Naive thymus-derived CD4-positive, alpha-beta T cell (primary cell): ENCODE measurements at regions of chr19 and their contacts with region 1.

Region 1: DNA sequence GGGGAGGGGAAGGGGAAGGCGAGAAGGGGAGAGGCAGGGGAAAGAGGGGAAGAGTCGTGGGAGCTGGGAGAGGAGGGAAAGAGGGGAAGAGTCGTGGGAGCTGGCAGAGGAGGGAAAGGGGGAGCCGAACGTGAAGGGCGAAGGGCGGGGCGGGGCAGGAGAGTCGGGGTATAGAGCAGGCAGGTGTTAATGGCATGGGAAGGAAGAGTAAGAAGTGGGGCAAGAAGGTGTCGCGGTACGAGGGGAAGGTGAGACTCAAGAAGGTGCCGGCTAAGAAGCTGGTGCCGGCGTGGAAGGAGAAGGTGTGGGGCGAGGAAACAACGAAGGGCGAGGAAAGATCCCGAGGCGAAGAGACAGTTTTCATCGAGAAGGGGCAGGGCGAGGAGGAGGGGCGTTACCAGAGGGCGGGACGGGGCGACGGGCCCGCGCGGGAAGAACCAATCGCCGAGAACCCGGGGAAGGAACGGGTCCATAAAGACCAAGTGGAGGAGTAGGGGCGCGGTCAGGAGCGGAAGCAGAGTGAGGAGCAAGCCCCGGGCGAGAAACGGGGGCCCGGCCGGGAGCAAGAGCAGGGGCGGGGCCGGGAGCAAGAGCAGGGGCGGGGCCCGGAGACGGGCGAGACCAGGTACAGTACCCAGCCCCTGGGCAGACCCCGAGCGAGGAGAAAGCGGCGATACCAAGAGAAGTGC is 463 bp downstream of the CATSPERG start:
- DNase-seq: peak; percentile 86 to 94 (median 93)
- ATAC-seq: peak; percentile 77
- H3K4me3 ChIP-seq: peak overlapping the region; percentile 92
- H3K4me3 Mint-ChIP-seq: peak overlapping the region; percentile 92 to 100 (median 96)
- H3K27ac ChIP-seq: peak overlapping the region; percentile 86
- H3K27ac Mint-ChIP-seq: peak overlapping the region; percentile 91 to 100 (median 97)
- H3K4me1 ChIP-seq: peaks cover 3 to 5% of the 10 kb centered on the region in 2 donors
- H3K4me1 Mint-ChIP-seq: peaks cover 16 to 28% (median 17%) of the 10 kb centered on the region in 7 donors
- H3K27me3 ChIP-seq: no peaks in the 10 kb centered on the region
- H3K27me3 Mint-ChIP-seq: no peaks in the 10 kb centered on the region

Region 2: DNA sequence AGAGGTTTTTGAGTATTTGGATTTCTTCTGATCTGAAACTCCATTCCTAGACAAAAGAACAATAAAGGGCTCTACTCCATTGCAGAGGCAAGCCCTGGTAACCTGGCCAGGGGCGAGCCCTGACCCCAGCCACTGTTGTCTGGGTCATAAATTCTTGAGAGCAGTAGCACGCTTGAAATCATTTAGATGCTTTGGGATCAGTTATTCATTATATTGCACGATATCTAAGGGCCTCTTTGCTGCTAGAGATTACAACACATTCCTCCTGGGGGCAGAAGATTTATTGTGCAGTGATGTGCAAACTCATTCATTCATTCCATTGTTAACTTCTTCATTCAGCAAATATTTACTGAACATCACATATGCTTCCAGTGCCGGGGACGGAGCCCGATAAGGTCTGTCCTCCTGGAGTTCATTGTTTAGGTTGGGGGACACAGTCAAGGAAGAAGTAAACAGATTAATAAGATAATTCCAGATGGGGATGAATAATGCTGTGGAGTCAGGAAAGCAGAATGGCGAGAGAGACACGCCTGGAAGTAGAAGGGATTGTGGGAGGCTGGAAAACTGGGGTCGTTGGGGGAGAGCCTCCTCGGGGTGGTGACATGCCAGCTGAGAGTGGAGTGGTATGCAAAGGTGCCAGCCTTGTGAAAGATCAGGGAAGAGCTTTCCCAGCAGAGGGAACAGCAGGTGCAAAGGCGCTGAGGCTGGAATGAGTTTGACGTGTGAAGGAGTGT is 394.1 kb before region 1 on chr19:
- CTCF ChIA-PET with region 1: no interaction called
- POLR2A ChIA-PET with region 1: no interaction called
- intact Hi-C with region 1: no loop called
- DNase-seq: no peak
- ATAC-seq: no peak
- H3K4me3 ChIP-seq: no peak overlapping the region
- H3K4me3 Mint-ChIP-seq: no peak overlapping the region
- H3K27ac ChIP-seq: no peak overlapping the region
- H3K27ac Mint-ChIP-seq: peak overlapping the region in 1 of 9 donors; percentile 23
- H3K4me1 ChIP-seq: no peaks in the 10 kb centered on the region
- H3K4me1 Mint-ChIP-seq: peaks cover 0 to 9% (median 3%) of the 10 kb centered on the region in 7 donors
- H3K27me3 ChIP-seq: no peaks in the 10 kb centered on the region
- H3K27me3 Mint-ChIP-seq: no peaks in the 10 kb centered on the region

Region 3: GRCh38 chr19:38095411-38096308 is 240.4 kb before region 1 on chr19:
- CTCF ChIA-PET with region 1: no interaction called
- POLR2A ChIA-PET with region 1: no interaction called
- intact Hi-C with region 1: loop called in 1 of 2 experiments (anchors 5 kb)
- DNase-seq: peak; percentile 7 to 49 (median 37)
- ATAC-seq: peak; percentile 79
- H3K4me3 ChIP-seq: no peak overlapping the region
- H3K4me3 Mint-ChIP-seq: no peak overlapping the region
- H3K27ac ChIP-seq: no peak overlapping the region
- H3K27ac Mint-ChIP-seq: peak overlapping the region in 6 of 9 donors; percentile 19 to 80 (median 46)
- H3K4me1 ChIP-seq: no peaks in the 10 kb centered on the region
- H3K4me1 Mint-ChIP-seq: peaks cover 0 to 8% (median 4%) of the 10 kb centered on the region in 7 donors
- H3K27me3 ChIP-seq: no peaks in the 10 kb centered on the region
- H3K27me3 Mint-ChIP-seq: no peaks in the 10 kb centered on the region

Region 4: GRCh38 chr19:38245826-38246498 is 90.1 kb before region 1 on chr19:
- CTCF ChIA-PET with region 1: interaction called, 15 read pairs
- POLR2A ChIA-PET with region 1: no interaction called
- intact Hi-C with region 1: loop called (anchors 1 kb)
- DNase-seq: no peak
- ATAC-seq: no peak
- H3K4me3 ChIP-seq: no peak overlapping the region
- H3K4me3 Mint-ChIP-seq: no peak overlapping the region
- H3K27ac ChIP-seq: no peak overlapping the region
- H3K27ac Mint-ChIP-seq: peak overlapping the region in 1 of 9 donors; percentile 33
- H3K4me1 ChIP-seq: peaks cover 0 to 3% of the 10 kb centered on the region in 2 donors
- H3K4me1 Mint-ChIP-seq: peaks cover 4 to 14% (median 5%) of the 10 kb centered on the region in 7 donors
- H3K27me3 ChIP-seq: no peaks in the 10 kb centered on the region
- H3K27me3 Mint-ChIP-seq: peaks cover 0 to 5% (median 0%) of the 10 kb centered on the region in 5 donors

Region 5: DNA sequence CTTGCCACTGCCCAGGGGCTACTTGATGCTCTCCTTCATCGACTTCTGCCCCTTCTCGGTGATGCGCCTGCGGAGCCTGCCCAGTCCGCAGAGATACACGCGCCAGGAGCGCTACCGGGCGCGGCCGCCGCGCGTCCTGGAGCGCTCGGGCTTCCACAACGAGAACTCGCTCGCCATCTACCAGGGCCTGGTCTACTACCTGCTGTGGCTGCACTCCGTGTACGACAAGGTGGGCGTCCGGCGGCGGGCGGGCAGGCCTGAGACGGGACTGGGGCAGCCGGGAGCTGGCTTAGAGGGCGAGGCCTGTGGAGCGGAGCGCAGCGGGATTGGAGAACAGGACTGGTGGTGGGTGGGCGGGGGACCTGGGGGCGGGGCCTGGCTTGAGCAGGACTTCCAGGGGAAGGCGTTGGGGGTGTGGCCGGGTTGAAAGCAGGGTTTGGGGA is 25.6 kb after region 1 on chr19:
- CTCF ChIA-PET with region 1: no interaction called
- POLR2A ChIA-PET with region 1: no interaction called
- intact Hi-C with region 1: loop called (anchors 1 kb)
- DNase-seq: peak in 8 of 9 donors; percentile 17 to 80 (median 34)
- ATAC-seq: peak; percentile 83
- H3K4me3 ChIP-seq: peak overlapping the region; percentile 55
- H3K4me3 Mint-ChIP-seq: peak overlapping the region; percentile 62 to 94 (median 83)
- H3K27ac ChIP-seq: no peak overlapping the region
- H3K27ac Mint-ChIP-seq: no peak overlapping the region
- H3K4me1 ChIP-seq: peaks cover 0 to 6% of the 10 kb centered on the region in 2 donors
- H3K4me1 Mint-ChIP-seq: peaks cover 0 to 21% (median 15%) of the 10 kb centered on the region in 7 donors
- H3K27me3 ChIP-seq: no peaks in the 10 kb centered on the region
- H3K27me3 Mint-ChIP-seq: peaks cover 0 to 38% (median 6%) of the 10 kb centered on the region in 5 donors

Region 6: DNA sequence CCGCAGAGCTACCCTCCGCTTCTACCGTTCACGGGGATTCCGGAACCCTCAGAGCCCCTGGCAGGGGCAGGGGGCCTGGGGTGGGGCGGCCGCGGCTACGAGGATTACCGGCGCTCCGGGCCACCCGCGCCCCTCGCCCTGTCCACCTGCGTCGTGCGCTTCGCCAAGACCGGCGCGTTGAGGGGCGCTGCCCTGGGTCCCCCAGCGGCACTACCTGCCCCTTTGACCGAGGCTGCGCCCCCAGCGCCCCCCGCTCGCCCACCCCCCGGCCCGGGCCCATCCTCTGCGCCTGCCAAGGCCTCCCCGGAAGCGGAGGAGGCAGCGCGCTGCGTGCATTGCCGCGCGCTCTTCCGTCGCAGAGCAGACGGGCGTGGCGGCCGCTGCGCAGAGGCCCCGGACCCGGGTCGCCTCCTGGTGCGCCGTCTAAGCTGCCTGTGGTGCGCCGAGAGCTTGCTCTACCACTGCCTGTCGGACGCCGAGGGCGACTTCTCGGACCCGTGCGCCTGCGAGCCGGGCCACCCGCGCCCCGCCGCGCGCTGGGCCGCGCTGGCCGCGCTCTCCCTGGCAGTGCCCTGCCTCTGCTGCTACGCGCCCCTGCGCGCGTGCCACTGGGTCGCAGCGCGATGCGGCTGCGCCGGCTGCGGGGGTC is 59.5 kb after region 1 on chr19:
- CTCF ChIA-PET with region 1: no interaction called
- POLR2A ChIA-PET with region 1: no interaction called
- intact Hi-C with region 1: no loop called
- DNase-seq: peak in 8 of 9 donors; percentile 36 to 66 (median 58)
- ATAC-seq: peak; percentile 79
- H3K4me3 ChIP-seq: peak overlapping the region; percentile 56
- H3K4me3 Mint-ChIP-seq: peak overlapping the region; percentile 65 to 84 (median 81)
- H3K27ac ChIP-seq: peak overlapping the region; percentile 60
- H3K27ac Mint-ChIP-seq: peak overlapping the region in 6 of 9 donors; percentile 5 to 91 (median 82)
- H3K4me1 ChIP-seq: peaks cover 5 to 19% of the 10 kb centered on the region in 2 donors
- H3K4me1 Mint-ChIP-seq: peaks cover 8 to 27% (median 22%) of the 10 kb centered on the region in 7 donors
- H3K27me3 ChIP-seq: no peaks in the 10 kb centered on the region
- H3K27me3 Mint-ChIP-seq: peaks cover 0 to 33% (median 5%) of the 10 kb centered on the region in 5 donors

Region 7: DNA sequence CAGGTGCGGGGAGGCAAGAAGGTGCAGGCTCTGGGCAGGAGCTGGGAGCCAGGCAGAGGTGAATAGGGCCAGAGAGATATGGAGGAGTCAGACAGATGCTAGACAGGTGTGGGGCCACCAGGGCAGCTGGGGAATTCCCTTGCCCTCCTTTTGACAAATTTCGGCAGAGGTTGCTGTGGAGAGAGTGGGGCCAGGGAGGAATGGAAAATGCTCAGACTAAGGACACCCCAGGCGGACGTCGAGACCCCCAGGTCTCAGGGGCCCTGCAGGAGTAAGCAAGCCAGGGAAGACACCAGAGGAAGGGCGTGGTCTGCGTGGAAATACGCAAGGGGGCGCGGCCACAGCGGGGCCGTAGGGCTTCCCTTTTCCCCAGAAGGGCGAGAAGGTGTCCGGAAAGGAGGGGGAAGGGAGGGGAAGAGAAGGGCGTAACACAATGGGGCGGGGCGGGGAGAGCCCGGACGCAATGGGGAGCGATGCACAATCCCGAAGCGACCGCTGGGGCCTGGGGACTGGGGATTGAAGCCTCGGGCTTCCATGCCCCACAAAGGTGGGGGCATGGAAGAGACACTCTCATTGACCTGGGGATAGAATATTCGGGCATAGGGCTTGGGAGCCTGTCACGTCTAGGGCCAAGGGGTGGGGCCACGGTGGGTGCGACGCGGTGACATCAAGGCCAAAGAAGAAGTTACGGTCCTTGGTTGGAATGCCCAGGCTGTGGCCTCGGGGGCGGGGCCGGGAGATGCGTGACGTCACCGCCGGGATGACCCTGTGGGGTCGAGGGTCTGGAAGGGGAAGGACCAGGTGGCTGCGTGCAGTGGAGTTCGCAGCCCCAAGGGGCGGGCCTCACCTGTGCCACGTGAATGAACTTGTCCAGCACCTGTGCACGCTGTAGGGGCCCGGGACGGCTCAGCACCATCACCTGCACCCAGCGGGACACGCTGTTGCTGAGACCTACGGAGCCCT is 81.7 kb after region 1 on chr19:
- CTCF ChIA-PET with region 1: no interaction called
- POLR2A ChIA-PET with region 1: no interaction called
- intact Hi-C with region 1: no loop called
- DNase-seq: peak in 8 of 9 donors; percentile 18 to 66 (median 26)
- ATAC-seq: peak; percentile 94
- H3K4me3 ChIP-seq: peak overlapping the region; percentile 55
- H3K4me3 Mint-ChIP-seq: peak overlapping the region; percentile 83 to 96 (median 86)
- H3K27ac ChIP-seq: peak overlapping the region; percentile 30
- H3K27ac Mint-ChIP-seq: peak overlapping the region; percentile 57 to 82 (median 71)
- H3K4me1 ChIP-seq: peaks cover 12 to 13% of the 10 kb centered on the region in 2 donors
- H3K4me1 Mint-ChIP-seq: peaks cover 20 to 23% (median 22%) of the 10 kb centered on the region in 7 donors
- H3K27me3 ChIP-seq: no peaks in the 10 kb centered on the region
- H3K27me3 Mint-ChIP-seq: peaks cover 0 to 2% (median 0%) of the 10 kb centered on the region in 5 donors

Region 8: GRCh38 chr19:38647368-38647965 is 311.4 kb after region 1 on chr19 and contains the start of gene ACTN4:
- CTCF ChIA-PET with region 1: no interaction called
- POLR2A ChIA-PET with region 1: no interaction called
- intact Hi-C with region 1: loop called in 1 of 2 experiments (anchors 1 kb)
- DNase-seq: peak; percentile 98 to 100 (median 100)
- ATAC-seq: peak; percentile 98
- H3K4me3 ChIP-seq: peak within 1 kb of the TSS; percentile 85
- H3K4me3 Mint-ChIP-seq: peak within 1 kb of the TSS; percentile 74 to 99 (median 89)
- H3K27ac ChIP-seq: peak within 1 kb of the TSS; percentile 69
- H3K27ac Mint-ChIP-seq: peak within 1 kb of the TSS; percentile 74 to 87 (median 84)
- H3K4me1 ChIP-seq: peaks cover 20 to 27% of the 10 kb centered on the region in 2 donors
- H3K4me1 Mint-ChIP-seq: peaks cover 20 to 52% (median 33%) of the 10 kb centered on the region in 7 donors
- H3K27me3 ChIP-seq: peaks cover 0 to 17% of the 10 kb centered on the region in 2 donors
- H3K27me3 Mint-ChIP-seq: peaks cover 0 to 33% (median 19%) of the 10 kb centered on the region in 5 donors
- total RNA-seq, gene ACTN4: 49.2 to 355 (median 54.4) TPM